ENCODE measurements at regions of chr1 and their contacts with region 1.

Region 1: GRCh38 chr1:86741947-86742572 is 37.7 kb downstream of the SH3GLB1 start:
- DNase-seq: no peak
- H3K4me3 ChIP-seq: no peak overlapping the region
- H3K27ac ChIP-seq: no peak overlapping the region
- H3K4me1 ChIP-seq: no peaks in the 10 kb centered on the region
- H3K27me3 ChIP-seq: no peaks in the 10 kb centered on the region
- CTCF ChIP-seq: peak in 2 of 3 experiments; percentile 39 to 58; a peak in 2 of 4 replicates
- EP300 ChIP-seq: no peak
- POLR2A ChIP-seq: no peak
- RAD21 ChIP-seq: peak; percentile 65

Region 2: DNA sequence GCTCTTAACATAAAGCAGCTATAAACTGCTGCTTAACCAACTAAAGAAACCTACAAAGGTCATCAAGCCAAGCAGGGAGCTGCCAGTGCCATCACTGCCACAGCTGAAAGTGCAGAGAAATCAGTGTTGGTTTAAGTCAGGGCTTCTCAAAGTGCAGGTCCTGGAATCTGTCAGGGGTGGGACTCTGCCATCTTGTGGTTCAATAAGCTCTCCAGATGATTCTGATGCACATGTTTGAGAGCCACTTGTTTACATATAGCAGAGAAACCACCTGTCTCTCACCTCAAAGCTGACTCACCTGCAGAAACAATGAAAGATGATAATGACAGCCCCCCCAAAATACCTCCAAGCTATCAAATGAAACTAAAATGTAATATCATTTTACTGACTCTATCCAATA is 11.6 kb after region 1 on chr1:
- CTCF ChIA-PET with region 1: interaction called, 45 read pairs
- POLR2A ChIA-PET with region 1: no interaction called
- DNase-seq: no peak
- H3K4me3 ChIP-seq: no peak overlapping the region
- H3K27ac ChIP-seq: no peak overlapping the region
- H3K4me1 ChIP-seq: peaks cover 0 to 3% (median 0%) of the 10 kb centered on the region in 4 experiments; a peak in 2 of 7 replicates
- H3K27me3 ChIP-seq: no peaks in the 10 kb centered on the region
- CTCF ChIP-seq: peak in 2 of 3 experiments; percentile 29 to 36; a peak in 2 of 4 replicates
- EP300 ChIP-seq: no peak
- POLR2A ChIP-seq: no peak
- RAD21 ChIP-seq: peak; percentile 50 to 64